Right ventricle myocardium superior (tissue), 1 donor: ENCODE measurements at regions of chr9 and their contacts with region 1.

Region 1: GRCh38 chr9:35553670-35554543 is 51.2 kb upstream of the TESK1 start:
- DNase-seq: peak; percentile 69
- ATAC-seq: peak; percentile 89

Region 2: GRCh38 chr9:35489313-35490154 is 64.4 kb before region 1 on chr9 and contains the start of gene RUSC2:
- intact Hi-C with region 1: loop called (anchors 2 kb)
- DNase-seq: peak; percentile 91
- ATAC-seq: peak; percentile 88
- total RNA-seq, gene RUSC2: 25.7 TPM

Region 3: DNA sequence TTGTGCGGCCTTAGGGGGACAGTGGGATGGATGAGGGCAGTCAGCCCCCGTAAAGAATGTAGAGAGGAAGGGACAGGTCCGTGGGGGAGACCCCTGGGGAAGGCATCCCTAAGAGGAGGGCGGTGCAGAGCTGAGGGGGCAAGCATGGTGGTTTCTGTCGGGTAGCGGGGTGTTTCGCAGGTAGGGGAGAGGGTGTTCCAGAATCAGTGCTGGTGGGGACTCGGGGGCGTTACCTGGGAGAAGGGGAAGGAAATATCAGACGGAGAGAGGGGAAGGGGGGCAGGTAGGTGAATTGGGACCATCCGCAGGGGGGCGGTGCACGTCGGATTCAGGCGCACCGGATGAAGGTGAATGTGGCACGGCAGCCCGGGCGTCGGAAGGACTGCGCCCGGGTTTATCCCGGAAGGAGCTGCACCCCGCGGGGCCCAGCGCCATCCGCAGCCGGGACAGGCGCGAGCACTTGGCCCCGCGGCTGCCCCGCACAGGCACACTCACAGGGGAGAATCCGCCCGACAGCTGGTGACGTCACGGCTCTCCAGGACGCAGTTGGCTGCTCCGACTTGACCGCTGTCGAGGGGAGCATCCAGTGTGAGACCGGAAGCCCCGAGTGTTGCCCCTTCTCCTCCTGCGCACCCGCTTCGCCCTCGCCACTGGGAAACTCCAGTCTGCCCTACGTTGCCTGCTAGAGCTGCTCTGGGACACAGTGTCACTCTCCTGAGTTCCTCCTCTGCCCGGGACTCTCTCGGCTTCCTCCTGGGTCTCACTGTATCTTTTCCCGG is 63.0 kb after region 1 on chr9:
- intact Hi-C with region 1: no loop called
- DNase-seq: peak; percentile 84
- ATAC-seq: peak; percentile 66